ENCODE measurements at regions of chr12 and their contacts with region 1.

Region 1: GRCh38 chr12:48021485-48022179 is 17.4 kb upstream of the COL2A1 start:
- DNase-seq: peak; percentile 95 to 96
- H3K4me3 ChIP-seq: no peak overlapping the region; the same call in 1 of the 2 replicates
- H3K4me3 Mint-ChIP-seq: peak overlapping the region; percentile 64
- H3K27ac Mint-ChIP-seq: peak overlapping the region; percentile 88
- H3K4me1 ChIP-seq: peaks cover 78% of the 10 kb centered on the region
- H3K4me1 Mint-ChIP-seq: peaks cover 70% of the 10 kb centered on the region
- H3K27me3 ChIP-seq: no peaks in the 10 kb centered on the region
- H3K27me3 Mint-ChIP-seq: no peaks in the 10 kb centered on the region
- CTCF ChIP-seq: peak in 1 of 2 experiments; percentile 15

Region 2: DNA sequence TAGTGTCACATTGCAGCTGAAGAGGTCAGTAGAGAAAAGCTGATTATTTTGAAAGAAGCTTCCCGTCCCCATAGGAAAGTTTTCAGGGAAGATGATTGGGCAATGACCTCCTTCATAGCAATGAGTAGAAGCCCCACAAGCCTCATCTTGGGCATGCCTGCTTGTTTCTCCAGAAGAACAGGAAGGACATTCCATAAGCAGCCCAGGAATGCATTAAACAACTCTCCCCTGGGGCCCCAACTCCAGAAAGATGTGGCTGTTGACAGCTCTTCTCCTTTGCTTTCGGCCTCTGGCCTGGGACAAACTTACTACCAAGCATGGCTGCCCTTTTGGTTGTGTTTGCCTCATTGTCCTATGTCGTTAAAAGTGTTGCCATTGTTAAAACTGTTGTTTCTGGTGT is 111.1 kb before region 1 on chr12:
- CTCF ChIA-PET with region 1: interaction called, 12 read pairs
- POLR2A ChIA-PET with region 1: interaction called, 9 read pairs
- intact Hi-C with region 1: loop called (anchors 1 kb)
- DNase-seq: peak; percentile 44 to 66
- H3K4me3 ChIP-seq: no peak overlapping the region
- H3K4me3 Mint-ChIP-seq: peak overlapping the region; percentile 7
- H3K27ac Mint-ChIP-seq: peak overlapping the region; percentile 48
- H3K4me1 ChIP-seq: peaks cover 58% of the 10 kb centered on the region
- H3K4me1 Mint-ChIP-seq: peaks cover 47% of the 10 kb centered on the region
- H3K27me3 ChIP-seq: no peaks in the 10 kb centered on the region
- H3K27me3 Mint-ChIP-seq: no peaks in the 10 kb centered on the region
- CTCF ChIP-seq: no peak

Region 3: DNA sequence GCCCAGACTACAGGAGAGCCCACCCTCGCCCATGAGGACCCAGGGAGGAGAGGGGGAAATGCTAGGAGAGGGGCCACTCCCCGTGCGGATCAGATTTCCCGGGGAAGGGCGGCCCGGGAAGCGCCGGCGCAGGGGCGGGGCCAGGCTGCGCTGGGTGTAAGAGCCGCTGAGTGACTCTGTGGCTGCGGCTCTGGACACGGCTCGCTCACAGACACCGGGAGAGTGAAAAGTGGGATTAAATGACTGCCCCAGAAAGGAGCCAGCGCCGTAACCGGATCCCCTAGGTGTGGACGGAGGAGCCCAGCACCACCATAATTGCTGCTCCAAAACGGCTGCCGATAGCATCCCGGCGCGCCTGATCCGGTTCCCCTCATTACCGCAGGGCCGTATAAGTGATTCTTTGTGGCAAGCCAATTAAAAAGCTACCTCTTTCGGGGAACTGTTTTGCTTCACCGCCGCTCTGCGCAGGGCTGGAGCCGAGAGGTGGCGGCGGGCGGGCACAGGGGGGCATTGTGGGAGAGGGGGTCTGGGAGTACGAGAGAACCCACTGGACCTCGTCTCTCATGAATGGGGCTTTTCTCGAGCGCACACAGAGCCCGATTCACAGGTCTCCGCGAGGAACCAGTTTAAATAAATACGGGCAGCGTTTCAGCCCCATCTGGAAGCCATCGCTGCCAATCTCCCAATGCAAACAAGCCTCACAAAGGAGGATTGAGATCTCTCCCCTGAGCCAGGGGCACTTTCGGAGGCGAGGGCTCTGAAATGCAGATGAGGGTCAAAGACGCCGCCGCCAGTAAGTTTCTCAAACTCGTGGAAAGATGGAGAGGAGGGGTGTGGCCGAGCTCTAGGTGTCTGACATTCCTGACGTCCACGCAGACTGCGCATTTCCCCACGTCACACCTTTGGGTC is 19.9 kb before region 1 on chr12:
- CTCF ChIA-PET with region 1: interaction called, 7 read pairs
- POLR2A ChIA-PET with region 1: interaction called, 33 read pairs
- intact Hi-C with region 1: loop called (anchors 1 kb)
- DNase-seq: peak; percentile 75
- H3K4me3 ChIP-seq: peak overlapping the region; percentile 50
- H3K4me3 Mint-ChIP-seq: peak overlapping the region; percentile 95
- H3K27ac Mint-ChIP-seq: peak overlapping the region; percentile 92
- H3K4me1 ChIP-seq: peaks cover 23% of the 10 kb centered on the region
- H3K4me1 Mint-ChIP-seq: peaks cover 8% of the 10 kb centered on the region
- H3K27me3 ChIP-seq: no peaks in the 10 kb centered on the region
- H3K27me3 Mint-ChIP-seq: no peaks in the 10 kb centered on the region
- CTCF ChIP-seq: no peak

Region 4: DNA sequence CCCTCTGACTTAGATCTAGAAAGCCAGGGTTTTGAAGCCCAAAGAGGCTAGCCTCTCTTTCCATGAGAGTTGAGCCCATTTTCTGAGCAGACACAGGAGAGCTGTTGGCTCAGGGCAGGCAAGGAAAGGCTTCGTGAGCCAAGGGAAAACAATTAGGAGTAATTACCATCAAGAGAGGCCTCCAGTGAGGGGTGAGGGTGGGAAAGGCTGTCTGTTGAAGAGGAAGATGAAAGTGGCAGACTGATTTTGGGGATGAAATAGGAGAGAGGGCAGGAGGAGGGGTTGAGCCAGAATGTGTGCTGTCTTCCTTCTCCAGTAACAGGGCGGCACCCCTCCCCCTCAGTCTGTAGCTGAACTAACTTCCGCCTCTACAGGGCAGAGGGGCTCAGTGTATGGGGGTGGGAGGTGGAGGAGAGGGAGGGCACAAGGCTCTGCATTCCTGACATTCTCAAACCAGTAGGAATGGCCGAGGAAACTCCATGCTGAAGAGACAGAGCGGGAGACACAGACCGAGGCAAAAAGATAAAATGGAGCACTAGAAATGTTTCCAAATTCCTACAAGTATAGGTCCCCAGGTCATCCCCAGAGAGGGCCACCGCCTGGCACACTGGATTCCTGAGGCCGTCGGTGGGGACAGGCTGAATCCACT is 15.8 kb after region 1 on chr12:
- CTCF ChIA-PET with region 1: interaction called, 3 read pairs
- POLR2A ChIA-PET with region 1: interaction called, 7 read pairs
- intact Hi-C with region 1: loop called (anchors 1 kb)
- DNase-seq: peak; percentile 79 to 86
- H3K4me3 ChIP-seq: no peak overlapping the region
- H3K4me3 Mint-ChIP-seq: peak overlapping the region; percentile 27
- H3K27ac Mint-ChIP-seq: peak overlapping the region; percentile 97
- H3K4me1 ChIP-seq: peaks cover 49% of the 10 kb centered on the region
- H3K4me1 Mint-ChIP-seq: peaks cover 65% of the 10 kb centered on the region
- H3K27me3 ChIP-seq: no peaks in the 10 kb centered on the region
- H3K27me3 Mint-ChIP-seq: no peaks in the 10 kb centered on the region
- CTCF ChIP-seq: no peak

Region 5: GRCh38 chr12:48061948-48062719 is 40.5 kb after region 1 on chr12:
- CTCF ChIA-PET with region 1: interaction called, 7 read pairs
- POLR2A ChIA-PET with region 1: no interaction called
- intact Hi-C with region 1: loop called (anchors 1 kb)
- DNase-seq: peak in 1 of 2 experiments; percentile 62
- H3K4me3 ChIP-seq: no peak overlapping the region
- H3K4me3 Mint-ChIP-seq: no peak overlapping the region
- H3K27ac Mint-ChIP-seq: no peak overlapping the region
- H3K4me1 ChIP-seq: no peaks in the 10 kb centered on the region
- H3K4me1 Mint-ChIP-seq: no peaks in the 10 kb centered on the region
- H3K27me3 ChIP-seq: no peaks in the 10 kb centered on the region
- H3K27me3 Mint-ChIP-seq: no peaks in the 10 kb centered on the region
- CTCF ChIP-seq: peak; percentile 49 to 62

Region 6: GRCh38 chr12:48197971-48198671 is 176.5 kb after region 1 on chr12:
- CTCF ChIA-PET with region 1: no interaction called
- POLR2A ChIA-PET with region 1: no interaction called
- intact Hi-C with region 1: loop called (anchors 1 kb)
- DNase-seq: peak; percentile 93 to 95
- H3K4me3 ChIP-seq: peak overlapping the region; percentile 63
- H3K4me3 Mint-ChIP-seq: peak overlapping the region; percentile 79
- H3K27ac Mint-ChIP-seq: peak overlapping the region; percentile 83
- H3K4me1 ChIP-seq: peaks cover 72% of the 10 kb centered on the region
- H3K4me1 Mint-ChIP-seq: peaks cover 58% of the 10 kb centered on the region
- H3K27me3 ChIP-seq: no peaks in the 10 kb centered on the region
- H3K27me3 Mint-ChIP-seq: no peaks in the 10 kb centered on the region
- CTCF ChIP-seq: peak in 1 of 2 experiments; percentile 20

Region 7: GRCh38 chr12:48659863-48660262 is 638.2 kb after region 1 on chr12:
- CTCF ChIA-PET with region 1: no interaction called
- POLR2A ChIA-PET with region 1: no interaction called
- intact Hi-C with region 1: no loop called
- DNase-seq: no peak
- H3K4me3 ChIP-seq: no peak overlapping the region
- H3K4me3 Mint-ChIP-seq: no peak overlapping the region
- H3K27ac Mint-ChIP-seq: no peak overlapping the region
- H3K4me1 ChIP-seq: no peaks in the 10 kb centered on the region
- H3K4me1 Mint-ChIP-seq: no peaks in the 10 kb centered on the region
- H3K27me3 ChIP-seq: no peaks in the 10 kb centered on the region
- H3K27me3 Mint-ChIP-seq: no peaks in the 10 kb centered on the region
- CTCF ChIP-seq: no peak